ENCODE measurements at regions of chr11 and their contacts with region 1.

Region 1: DNA sequence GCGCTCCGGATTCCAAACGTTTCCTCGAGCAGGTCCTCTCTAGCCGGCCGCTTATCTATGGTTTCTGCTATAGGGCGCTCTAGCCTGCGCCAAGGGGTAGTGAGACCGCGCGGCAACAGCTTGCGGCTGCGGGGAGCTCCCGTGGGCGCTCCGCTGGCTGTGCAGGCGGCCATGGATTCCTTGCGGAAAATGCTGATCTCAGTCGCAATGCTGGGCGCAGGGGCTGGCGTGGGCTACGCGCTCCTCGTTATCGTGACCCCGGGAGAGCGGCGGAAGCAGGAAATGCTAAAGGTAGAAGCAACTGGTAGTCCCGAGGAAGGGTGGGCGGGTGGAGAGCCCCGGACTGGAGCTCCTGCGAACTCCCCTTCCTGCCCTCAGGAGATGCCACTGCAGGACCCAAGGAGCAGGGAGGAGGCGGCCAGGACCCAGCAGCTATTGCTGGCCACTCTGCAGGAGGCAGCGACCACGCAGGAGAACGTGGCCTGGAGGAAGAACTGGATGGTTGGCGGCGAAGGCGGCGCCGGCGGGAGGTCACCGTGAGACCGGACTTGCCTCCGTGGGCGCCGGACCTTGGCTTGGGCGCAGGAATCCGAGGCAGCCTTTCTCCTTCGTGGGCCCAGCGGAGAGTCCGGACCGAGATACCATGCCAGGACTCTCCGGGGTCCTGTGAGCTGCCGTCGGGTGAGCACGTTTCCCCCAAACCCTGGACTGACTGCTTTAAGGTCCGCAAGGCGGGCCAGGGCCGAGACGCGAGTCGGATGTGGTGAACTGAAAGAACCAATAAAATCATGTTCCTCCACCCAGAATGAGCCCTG is at the starts of genes LBHD1 and UQCC3:
- DNase-seq: peak; percentile 85
- H3K4me3 Mint-ChIP-seq: peak within 1 kb of the TSS; percentile 95
- H3K27ac Mint-ChIP-seq: peak within 1 kb of the TSS; percentile 95
- H3K4me1 Mint-ChIP-seq: peaks cover 6% of the 10 kb centered on the region
- H3K27me3 Mint-ChIP-seq: no peaks in the 10 kb centered on the region
- CTCF ChIP-seq: no peak
- total RNA-seq, gene LBHD1: 8.3 and 8.7 TPM in 2 replicates
- total RNA-seq, gene UQCC3: 11.6 and 13.8 TPM in 2 replicates

Region 2: DNA sequence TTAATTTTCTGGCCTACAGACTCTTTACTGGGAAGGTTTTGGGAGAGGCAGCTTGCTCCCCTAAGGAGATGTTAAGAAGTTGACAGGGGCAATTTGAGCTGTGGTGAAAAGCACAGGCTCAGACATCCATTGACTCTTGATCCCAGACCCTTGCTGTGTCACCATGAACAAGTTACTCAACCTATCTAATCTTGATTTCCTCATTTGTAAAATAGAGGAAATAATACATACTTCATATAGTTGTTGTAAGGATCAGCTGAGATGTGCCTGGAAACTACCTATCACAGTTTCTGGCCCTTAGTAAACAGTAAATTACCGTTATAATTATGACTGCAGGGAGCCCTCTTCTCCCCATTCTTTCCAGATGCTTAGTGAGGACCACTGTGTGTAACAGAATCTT is 356.4 kb before region 1 on chr11:
- CTCF ChIA-PET with region 1: no interaction called
- POLR2A ChIA-PET with region 1: no interaction called
- intact Hi-C with region 1: no loop called
- DNase-seq: no peak
- H3K4me3 Mint-ChIP-seq: no peak overlapping the region
- H3K27ac Mint-ChIP-seq: no peak overlapping the region
- H3K4me1 Mint-ChIP-seq: no peaks in the 10 kb centered on the region
- H3K27me3 Mint-ChIP-seq: peaks cover 88% of the 10 kb centered on the region
- CTCF ChIP-seq: no peak

Region 3: DNA sequence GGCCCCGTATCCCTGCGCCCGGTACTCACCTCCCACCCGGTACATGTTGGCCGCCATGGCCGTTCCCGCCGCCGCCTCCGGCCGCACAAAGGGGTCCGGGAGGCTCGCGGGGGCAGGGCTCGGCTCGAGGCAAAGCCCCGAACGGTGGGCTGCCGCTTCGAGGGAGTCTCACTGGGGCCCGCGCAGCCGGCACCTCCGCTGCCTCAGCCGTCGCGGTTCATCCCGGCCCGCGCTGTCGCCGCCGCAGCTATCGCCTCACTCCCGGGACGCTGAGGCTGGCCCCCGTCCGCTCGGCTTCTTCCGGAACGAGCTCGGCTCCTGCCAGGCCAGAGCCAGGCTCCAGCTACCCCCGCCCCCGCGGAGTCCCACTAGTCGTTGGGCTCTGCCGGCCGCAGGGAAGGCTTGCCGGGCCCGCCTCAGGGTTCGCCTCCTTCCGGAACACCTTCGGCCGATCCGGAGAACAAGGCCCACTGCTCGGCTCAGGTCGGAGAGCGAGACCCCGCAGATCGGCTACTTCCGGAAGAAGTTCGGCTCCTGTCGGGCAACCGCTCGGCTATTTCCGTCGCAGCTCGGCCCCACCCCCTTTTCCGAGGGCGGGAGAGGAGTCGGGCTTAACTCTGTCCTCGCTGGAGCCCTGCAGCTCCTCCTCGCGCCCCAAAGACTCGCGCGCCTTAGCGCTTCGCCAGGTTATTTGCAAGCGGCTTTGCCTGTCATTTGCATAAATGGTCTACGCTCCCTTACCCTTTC is 70.2 kb before region 1 on chr11 and contains the start of gene MTA2:
- CTCF ChIA-PET with region 1: interaction called, 3 read pairs
- POLR2A ChIA-PET with region 1: interaction called, 26 read pairs
- intact Hi-C with region 1: no loop called
- DNase-seq: peak; percentile 98
- H3K4me3 Mint-ChIP-seq: peak within 1 kb of the TSS; percentile 86
- H3K27ac Mint-ChIP-seq: peak within 1 kb of the TSS; percentile 96
- H3K4me1 Mint-ChIP-seq: peaks cover 38% of the 10 kb centered on the region
- H3K27me3 Mint-ChIP-seq: no peaks in the 10 kb centered on the region
- CTCF ChIP-seq: no peak
- total RNA-seq, gene MTA2: 139 and 176 TPM in 2 replicates

Region 4: DNA sequence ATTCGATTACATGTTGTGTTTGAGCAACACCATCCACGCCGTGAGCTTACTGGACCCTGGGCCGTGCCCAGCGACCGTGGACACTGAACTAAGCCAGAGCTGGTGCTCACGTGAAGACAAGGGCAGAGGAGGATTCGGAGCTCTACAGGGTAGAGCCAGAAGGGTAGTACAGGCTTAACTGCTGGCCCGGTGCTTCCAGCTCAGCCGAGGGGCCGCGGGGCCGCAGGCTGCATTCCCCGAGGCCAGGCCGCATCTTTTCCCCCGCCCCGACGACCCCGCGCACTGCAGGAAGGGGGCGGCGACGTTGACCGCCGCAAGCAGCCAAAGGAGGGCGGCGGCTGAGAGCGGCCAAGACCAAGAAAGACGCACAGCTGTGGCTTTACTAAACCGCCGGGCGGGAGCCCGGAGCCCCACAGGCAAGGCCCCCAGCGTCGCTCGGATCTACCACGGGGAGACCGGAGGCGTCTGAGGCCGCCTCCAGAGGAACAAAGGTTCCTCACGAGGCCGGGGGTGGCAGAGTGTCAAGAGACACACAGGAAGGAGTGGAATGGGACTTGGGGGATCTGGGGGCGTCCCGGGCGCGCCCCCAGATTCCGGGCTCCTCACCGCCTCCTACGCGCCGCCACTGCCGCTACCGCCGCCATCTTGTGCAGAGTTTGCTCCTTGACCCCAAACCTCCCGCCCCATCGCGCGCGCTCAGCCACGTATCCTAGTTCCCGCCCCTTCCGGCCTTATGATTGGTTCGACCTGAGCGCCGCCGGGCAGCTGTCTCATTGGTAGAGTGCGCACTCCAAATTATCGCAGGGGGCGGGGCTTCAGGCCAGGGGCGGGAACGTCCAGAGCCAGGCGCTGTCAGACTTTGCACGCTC is 25.6 kb before region 1 on chr11 and contains the start of gene GANAB:
- CTCF ChIA-PET with region 1: interaction called, 3 read pairs
- POLR2A ChIA-PET with region 1: interaction called, 98 read pairs
- intact Hi-C with region 1: no loop called
- DNase-seq: peak; percentile 99
- H3K4me3 Mint-ChIP-seq: peak within 1 kb of the TSS; percentile 95
- H3K27ac Mint-ChIP-seq: peak within 1 kb of the TSS; percentile 92
- H3K4me1 Mint-ChIP-seq: no peaks in the 10 kb centered on the region
- H3K27me3 Mint-ChIP-seq: no peaks in the 10 kb centered on the region
- CTCF ChIP-seq: no peak
- total RNA-seq, gene GANAB: 364 and 374 TPM in 2 replicates

Region 5: DNA sequence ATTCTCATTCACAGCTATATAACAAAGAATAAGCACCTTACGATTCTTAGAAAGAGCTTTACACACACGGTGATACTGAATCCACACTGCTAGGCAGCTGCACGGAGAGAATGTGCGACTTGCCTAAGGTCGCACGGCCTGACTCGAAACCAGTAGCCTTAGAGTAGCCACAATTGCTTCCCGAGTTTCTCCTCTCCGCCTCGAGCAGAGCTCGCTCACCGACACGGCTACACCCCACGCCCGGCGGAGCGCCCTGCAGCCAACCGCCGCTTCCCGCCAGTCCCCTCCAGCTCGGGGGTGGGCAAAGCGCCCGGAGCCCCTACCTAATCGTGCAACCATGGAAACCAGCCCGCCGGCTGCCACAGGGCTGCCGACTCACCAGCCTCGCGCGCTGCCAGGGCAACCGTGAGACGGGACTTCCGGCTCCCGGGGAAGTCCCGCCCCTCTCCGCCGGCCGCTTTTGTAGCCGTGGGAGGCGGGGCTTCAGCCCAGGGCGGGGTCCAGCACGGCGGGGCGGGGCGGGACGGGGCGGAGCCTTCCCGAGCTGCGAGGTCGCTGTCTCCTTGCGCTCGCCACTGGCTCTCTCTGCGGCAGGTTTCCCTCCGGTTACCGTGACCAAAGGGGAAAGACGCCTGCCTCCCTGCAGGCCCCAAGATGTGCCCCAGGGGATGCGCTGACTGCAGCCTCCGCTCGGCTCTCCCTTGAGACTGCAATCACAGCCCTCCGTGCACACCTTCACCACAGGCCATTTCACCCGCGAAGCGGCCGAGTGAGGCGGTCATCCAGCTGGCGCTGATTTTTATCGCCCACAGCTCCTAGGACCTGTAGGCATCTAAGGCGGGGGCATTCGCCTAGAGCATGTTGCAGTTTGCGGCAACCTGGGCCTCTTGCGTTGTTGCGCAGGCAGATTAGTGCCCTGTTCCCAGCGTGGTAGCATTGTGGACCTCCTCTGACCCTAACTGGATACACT is 34.4 kb after region 1 on chr11:
- CTCF ChIA-PET with region 1: interaction called, 3 read pairs
- POLR2A ChIA-PET with region 1: interaction called, 17 read pairs
- intact Hi-C with region 1: no loop called
- DNase-seq: peak; percentile 91
- H3K4me3 Mint-ChIP-seq: peak overlapping the region; percentile 92
- H3K27ac Mint-ChIP-seq: peak overlapping the region; percentile 94
- H3K4me1 Mint-ChIP-seq: peaks cover 25% of the 10 kb centered on the region
- H3K27me3 Mint-ChIP-seq: no peaks in the 10 kb centered on the region
- CTCF ChIP-seq: no peak

Region 6: GRCh38 chr11:62771144-62772021 is 99.6 kb after region 1 on chr11 and contains the start of gene TAF6L:
- CTCF ChIA-PET with region 1: no interaction called
- POLR2A ChIA-PET with region 1: interaction called, 15 read pairs
- intact Hi-C with region 1: no loop called
- DNase-seq: peak; percentile 98
- H3K4me3 Mint-ChIP-seq: peak within 1 kb of the TSS; percentile 98
- H3K27ac Mint-ChIP-seq: peak within 1 kb of the TSS; percentile 95
- H3K4me1 Mint-ChIP-seq: peaks cover 5% of the 10 kb centered on the region
- H3K27me3 Mint-ChIP-seq: no peaks in the 10 kb centered on the region
- CTCF ChIP-seq: no peak
- total RNA-seq, gene TAF6L: 11.6 and 12.0 TPM in 2 replicates

Region 7: GRCh38 chr11:62831520-62832335 is 159.9 kb after region 1 on chr11 and contains the start of gene STX5:
- CTCF ChIA-PET with region 1: interaction called, 3 read pairs
- POLR2A ChIA-PET with region 1: interaction called, 12 read pairs
- intact Hi-C with region 1: no loop called
- DNase-seq: peak; percentile 98
- H3K4me3 Mint-ChIP-seq: peak within 1 kb of the TSS; percentile 89
- H3K27ac Mint-ChIP-seq: peak within 1 kb of the TSS; percentile 99
- H3K4me1 Mint-ChIP-seq: peaks cover 31% of the 10 kb centered on the region
- H3K27me3 Mint-ChIP-seq: no peaks in the 10 kb centered on the region
- CTCF ChIP-seq: no peak
- total RNA-seq, gene STX5: 71.8 and 72.0 TPM in 2 replicates